ENCODE measurements at regions of chr17 and their contacts with region 1.

Region 1: DNA sequence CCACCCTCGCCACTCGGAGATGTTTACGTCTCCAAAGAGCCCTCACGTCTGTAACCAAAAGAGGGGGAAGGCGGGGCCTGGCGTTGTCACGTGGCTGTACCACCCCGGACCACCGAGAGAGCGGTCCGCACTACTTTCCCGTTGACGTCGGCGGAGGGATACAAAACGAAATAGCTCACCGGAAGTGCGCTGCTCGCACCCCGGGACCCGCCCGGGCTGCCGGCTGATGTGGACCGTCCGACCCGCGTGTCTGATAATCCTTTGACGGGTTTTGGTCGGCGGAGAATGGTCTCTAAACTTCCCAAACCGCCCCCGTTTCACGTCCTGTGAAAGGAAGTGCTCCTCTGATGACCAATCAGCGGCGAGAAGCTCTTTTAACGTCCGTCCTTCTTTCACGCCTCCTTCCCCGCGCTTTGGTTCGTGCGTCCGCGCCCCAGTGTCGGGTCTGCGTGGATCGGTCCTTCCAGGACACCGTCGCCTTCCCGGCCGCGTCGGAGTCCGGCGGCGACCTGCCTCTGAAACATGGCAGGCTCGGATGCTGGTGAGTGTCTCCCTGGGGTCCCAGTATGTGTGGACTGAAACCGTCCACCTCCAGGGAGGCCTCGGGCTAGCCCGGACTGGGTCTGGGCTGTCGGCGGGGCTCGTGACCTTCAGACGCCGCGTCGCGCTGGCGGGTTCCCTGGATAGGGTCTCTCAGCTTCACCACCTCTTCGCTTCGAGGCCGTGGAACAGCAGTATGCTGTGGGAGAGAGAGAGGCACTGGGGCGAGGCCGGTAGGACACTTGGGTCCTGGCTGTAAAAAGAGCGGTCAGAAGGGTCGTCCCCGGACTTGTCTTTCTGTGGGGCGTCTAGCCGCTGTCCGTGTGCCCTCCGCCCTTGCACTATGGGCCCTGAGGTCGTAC is at the start of gene CEP95:
- DNase-seq: peak; percentile 94

Region 2: DNA sequence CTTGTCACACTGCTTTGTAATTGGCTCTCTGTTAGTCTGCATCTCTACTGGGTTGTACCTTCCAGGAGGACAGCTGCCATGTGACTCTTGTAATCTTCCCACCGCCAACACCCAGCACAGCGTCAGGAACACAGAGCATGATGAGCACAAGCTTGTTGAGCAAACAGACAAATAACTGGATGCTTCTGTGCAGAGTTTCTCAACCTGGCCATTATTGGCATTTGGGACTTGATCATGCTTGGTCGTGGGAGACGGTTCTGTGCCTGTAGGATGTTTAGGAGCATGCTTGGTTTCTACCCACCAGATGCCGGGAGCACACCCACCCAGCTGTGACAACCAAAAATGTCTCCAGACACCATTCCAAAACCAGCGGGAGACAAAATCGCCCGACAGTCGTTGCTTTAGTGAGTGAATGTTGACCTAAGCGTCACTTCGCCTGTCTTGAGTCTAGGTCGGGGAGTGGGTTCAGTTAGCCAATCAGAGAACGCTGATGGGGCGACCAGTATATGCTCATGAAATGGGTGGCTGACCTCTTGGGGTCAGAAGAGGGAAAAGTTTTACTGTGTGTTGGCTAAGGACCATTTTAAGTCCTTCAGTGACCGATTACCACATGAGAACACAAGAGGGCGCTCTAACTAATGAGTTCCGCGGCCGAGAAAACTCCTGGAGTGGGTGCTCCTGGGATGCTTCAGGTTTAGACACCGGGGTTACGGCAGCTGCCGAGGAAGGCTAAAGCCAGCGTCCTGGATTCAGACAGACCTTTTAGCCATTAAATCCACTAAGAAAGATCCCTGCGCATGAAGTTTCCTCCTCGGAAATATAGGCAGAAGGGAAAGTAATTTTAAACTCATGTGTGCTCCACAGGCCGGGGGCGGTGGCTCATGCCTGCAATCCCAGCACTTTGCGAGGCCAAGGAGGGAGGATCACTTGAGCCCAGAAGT is 185.9 kb before region 1 on chr17:
- in situ Hi-C with region 1: loop called (anchors 10 kb)
- DNase-seq: peak; percentile 85

Region 3: DNA sequence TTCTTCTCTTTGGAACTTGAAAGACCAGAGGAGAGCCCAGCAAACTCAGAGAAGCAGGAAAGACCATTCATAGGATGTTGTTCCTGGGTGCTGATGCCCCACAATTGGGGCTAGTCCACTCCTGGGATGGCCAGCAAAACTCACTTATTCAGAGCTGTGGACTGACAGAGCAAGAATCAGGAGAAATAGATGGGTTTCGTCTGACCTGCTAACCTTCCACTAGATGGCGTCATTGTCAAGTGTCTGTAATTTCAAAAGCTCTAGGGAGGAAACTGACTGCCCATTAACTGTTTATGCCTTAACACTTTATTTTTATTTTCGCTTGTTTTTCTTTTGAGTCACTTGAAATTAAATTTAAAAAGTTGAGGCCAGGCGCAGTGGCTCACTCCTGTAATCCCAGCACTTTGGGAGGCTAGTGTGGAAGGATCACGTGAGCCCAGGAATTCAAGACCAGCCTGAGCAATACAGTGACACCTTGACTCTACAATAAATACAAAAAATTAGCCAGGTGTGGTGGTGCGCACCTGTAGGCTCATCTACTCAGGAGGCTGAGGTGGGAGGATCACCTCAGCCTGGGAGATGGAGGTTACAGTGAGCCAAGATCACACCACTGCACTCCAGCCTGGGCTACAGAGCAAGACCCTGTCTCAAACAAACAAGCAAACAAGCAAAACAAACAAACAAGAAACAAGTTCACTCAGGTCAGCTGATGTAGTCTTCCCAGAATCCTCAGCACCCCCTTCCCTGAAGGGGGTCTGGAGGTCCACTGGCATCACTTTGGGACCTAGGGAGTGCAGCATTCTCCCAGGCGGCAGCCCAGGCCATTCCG is 86.5 kb before region 1 on chr17:
- in situ Hi-C with region 1: no loop called
- DNase-seq: peak; percentile 80

Region 4: DNA sequence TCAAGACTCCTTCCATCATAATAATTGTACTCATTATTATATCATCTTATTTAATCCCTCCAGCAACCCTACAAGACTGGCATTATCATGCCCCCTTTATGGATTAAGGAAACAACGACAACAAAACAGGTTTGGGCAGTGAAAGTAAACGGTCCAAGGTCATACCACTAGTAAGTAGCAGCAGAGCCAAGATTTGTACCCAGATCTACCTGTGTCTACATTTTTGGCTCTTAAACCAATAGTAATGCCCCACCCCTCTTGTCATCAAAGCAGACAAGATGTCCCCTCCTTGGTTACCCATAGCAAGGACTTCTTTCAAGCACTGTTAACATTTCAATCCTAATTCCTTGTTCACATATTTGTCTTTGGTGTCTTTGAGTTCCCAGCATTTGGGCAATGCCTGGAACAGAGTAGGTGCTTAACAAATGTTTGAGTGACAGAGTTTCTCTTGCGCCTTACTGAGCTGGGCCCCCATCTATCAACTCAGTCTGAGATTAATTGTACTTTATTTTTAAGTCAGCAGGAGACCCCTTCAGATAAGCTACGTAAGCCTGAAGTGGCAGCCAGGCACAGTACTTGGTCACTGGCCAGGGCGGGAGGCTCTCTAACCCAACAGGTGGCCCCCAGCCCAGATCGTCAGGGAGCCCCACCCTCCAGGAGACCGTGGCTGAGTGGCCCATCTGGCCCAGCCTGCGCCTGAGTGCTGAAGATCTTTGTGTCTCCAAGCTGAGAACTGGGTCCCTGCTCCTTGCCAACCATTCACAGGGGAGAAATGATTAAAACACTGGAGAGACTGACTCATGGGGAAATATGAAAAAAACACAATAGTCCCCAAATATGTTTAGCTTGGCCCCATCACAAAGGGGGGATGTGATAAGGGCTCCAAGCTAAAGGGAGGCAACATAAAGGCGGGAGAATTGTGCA is 978.8 kb after region 1 on chr17:
- in situ Hi-C with region 1: no loop called
- DNase-seq: no peak